ENCODE measurements at regions of chr1 and their contacts with region 1.

Region 1: GRCh38 chr1:180178511-180179161 is 24.0 kb downstream of the QSOX1 start:
- DNase-seq: peak; percentile 76
- H3K4me3 Mint-ChIP-seq: no peak overlapping the region
- H3K27ac Mint-ChIP-seq: no peak overlapping the region
- H3K4me1 Mint-ChIP-seq: no peaks in the 10 kb centered on the region
- H3K27me3 Mint-ChIP-seq: no peaks in the 10 kb centered on the region

Region 2: DNA sequence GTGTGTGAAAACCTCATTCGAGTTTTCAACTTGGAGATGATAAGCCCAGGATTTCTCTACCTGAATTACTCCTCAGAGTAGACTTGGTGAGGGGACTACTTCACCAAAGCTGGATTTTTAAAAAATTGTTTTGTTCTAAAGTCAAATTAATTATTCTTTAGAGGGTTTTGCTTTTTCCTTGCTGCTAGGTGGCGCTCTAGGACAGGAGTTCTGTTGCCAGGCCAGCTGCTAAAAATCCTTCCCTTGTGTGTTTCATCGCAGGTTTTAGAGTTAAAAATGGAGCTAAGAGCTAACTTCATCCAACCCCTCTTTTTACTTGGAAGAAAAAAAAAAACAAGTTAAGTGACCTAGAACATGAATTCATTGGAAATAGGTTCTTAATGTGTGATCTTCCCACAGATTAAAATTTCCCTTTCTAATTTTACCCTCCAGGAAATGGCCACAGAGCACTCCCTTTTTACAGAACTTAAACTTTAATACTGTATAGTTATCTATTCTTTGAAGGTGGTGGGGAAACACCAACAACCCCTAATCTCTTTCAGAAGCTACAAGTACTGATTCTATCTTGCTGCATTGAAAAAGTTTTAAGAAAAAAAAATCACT is 472.2 kb before region 1 on chr1:
- CTCF ChIA-PET with region 1: interaction called, 30 read pairs
- DNase-seq: peak; percentile 75
- H3K4me3 Mint-ChIP-seq: no peak overlapping the region
- H3K27ac Mint-ChIP-seq: no peak overlapping the region
- H3K4me1 Mint-ChIP-seq: peaks cover 18% of the 10 kb centered on the region
- H3K27me3 Mint-ChIP-seq: peaks cover 3% of the 10 kb centered on the region

Region 3: GRCh38 chr1:179848233-179848632 is 330.4 kb before region 1 on chr1:
- CTCF ChIA-PET with region 1: no interaction called
- DNase-seq: no peak
- H3K4me3 Mint-ChIP-seq: no peak overlapping the region
- H3K27ac Mint-ChIP-seq: no peak overlapping the region
- H3K4me1 Mint-ChIP-seq: peaks cover 5% of the 10 kb centered on the region
- H3K27me3 Mint-ChIP-seq: no peaks in the 10 kb centered on the region

Region 4: DNA sequence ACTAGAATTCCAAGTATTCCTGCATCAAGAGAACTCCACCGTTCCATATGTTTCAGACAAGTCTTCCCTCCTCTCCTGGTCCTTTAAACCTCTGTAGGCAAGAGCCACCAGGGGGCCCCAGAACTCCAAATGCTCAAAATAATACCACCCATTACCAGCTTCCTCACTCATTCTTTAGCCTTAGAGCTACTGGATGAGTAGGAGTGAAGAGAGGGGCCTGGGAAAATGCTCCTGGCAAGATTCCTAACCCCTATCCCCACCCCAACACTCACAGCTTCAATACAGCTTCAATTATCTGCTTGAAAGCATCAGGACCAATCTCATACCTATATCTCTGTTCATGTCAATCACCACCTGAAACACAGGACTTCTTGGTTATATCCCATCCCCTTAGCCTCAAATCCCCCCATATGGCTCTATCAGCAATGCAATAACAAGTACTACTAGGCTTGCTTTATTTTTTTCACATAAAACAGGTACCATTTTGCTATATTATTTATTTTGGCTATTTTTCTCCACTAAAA is 310.8 kb before region 1 on chr1:
- CTCF ChIA-PET with region 1: interaction called, 98 read pairs
- DNase-seq: peak; percentile 69
- H3K4me3 Mint-ChIP-seq: no peak overlapping the region
- H3K27ac Mint-ChIP-seq: no peak overlapping the region
- H3K4me1 Mint-ChIP-seq: peaks cover 8% of the 10 kb centered on the region
- H3K27me3 Mint-ChIP-seq: no peaks in the 10 kb centered on the region

Region 5: DNA sequence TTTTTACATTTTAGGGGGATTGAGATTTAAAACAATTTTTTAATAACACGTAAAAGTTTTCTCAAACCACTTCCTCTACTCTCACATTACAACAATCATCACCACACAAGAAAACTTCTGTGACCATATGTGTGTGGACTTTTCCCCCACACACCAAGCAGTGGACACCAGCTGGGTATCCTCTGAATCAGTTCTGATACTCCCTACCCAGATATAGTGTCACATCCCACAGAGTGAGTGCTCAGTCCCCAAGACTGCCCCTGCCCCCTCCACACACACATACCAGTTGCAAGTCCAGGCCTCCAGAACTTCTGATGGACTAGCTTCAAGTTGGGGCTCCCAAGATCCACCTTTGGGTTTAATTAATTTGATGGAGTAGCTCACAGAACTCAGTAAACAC is 77.2 kb before region 1 on chr1:
- CTCF ChIA-PET with region 1: interaction called, 10 read pairs
- DNase-seq: no peak
- H3K4me3 Mint-ChIP-seq: no peak overlapping the region
- H3K27ac Mint-ChIP-seq: no peak overlapping the region
- H3K4me1 Mint-ChIP-seq: peaks cover 10% of the 10 kb centered on the region
- H3K27me3 Mint-ChIP-seq: no peaks in the 10 kb centered on the region

Region 6: GRCh38 chr1:180194546-180195207 is 16.0 kb after region 1 on chr1:
- CTCF ChIA-PET with region 1: interaction called, 12 read pairs
- DNase-seq: no peak
- H3K4me3 Mint-ChIP-seq: no peak overlapping the region
- H3K27ac Mint-ChIP-seq: no peak overlapping the region
- H3K4me1 Mint-ChIP-seq: no peaks in the 10 kb centered on the region
- H3K27me3 Mint-ChIP-seq: no peaks in the 10 kb centered on the region

Measured in activated naive CD4-positive, alpha-beta T cell treated with anti-CD3 and anti-CD28 coated beads, Interleukin-2, amount 10 ng/mL, durations not matched to agents 7 days and 5 days (primary cell).